Right ventricle myocardium superior (tissue), 1 donor: ENCODE measurements at regions of chr22 and their contacts with region 1.

Region 1: DNA sequence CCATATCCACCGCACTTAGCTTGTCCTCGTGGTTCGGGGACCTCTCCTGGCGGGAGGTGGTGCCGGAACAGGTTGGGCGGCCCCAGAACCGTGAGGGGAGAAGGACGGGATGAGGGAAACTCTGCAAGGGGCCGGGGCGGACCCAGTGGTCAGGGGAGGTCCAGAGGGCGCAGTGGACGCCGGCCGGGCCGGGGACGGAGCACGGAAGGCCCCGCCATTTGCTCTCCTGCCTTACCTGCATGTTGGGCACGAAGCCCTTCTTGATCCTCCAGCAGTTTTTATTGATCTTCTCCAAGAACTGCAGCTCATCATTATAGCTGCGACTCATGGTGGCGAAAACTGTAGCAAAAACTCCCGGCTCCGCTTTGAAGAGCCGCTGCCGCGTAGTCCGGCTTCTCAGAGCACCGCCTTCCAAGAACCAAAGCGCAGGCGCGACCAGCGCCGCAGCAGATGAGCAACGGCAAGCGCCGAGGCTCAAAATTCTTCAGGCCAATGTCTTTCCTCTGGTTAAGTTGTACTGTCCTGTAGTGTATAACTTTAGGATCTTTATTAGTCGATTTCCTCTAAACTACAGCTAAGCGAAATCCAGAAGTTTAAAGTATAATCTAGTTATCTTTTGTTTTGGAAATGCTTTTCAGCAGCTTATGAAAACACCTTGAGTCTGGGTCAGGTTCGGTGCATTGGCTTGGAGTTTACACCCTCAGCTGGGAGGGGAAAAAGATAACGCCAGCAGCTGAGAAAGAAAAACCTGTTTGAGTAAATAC is at the start of gene RTCB:
- DNase-seq: peak; percentile 95
- ATAC-seq: peak; percentile 96
- total RNA-seq, gene RTCB: 38.5 TPM

Region 2: DNA sequence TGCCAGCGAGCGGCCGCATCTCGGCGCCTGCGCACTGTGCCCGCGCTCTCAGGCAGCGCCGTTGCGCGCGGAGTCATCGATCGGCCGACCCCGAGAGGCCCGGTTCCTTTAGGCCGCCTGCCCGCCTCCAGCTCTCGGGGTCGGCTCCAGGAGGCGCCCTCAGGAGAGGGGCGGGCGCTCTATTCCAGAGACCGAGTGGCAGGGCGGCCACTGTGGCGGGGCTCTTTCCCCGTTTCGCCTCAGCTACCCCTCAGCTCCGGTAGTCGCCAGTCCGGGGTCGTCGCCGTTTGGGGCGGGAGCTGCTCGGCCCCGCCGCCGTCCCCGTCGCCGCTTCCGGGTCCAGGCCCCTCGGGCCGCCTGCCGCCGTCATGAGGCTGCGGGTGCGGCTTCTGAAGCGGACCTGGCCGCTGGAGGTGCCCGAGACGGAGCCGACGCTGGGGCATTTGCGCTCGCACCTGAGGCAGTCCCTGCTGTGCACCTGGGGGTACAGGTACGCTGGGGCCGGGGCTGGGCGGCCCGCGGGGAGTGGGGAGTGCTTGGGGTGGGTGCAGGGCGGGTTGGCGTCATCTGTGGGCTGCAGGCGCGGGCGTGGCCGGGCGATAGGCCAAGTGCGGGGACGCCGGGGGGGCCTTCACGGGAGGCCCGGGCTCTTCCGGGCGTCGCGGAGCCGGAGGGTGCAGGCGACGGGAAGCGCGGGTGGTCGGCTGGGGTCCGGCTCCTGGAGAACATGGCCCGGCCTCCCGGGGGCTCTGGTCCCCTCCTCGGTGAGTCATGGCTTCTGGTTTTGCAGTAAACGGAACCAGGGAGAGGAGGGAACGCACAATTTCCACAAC is 62.8 kb after region 1 on chr22 and contains the start of gene FBXO7:
- intact Hi-C with region 1: loop called (anchors 10 kb)
- DNase-seq: peak; percentile 96
- ATAC-seq: peak; percentile 93
- total RNA-seq, gene FBXO7: 30.3 TPM

Region 3: DNA sequence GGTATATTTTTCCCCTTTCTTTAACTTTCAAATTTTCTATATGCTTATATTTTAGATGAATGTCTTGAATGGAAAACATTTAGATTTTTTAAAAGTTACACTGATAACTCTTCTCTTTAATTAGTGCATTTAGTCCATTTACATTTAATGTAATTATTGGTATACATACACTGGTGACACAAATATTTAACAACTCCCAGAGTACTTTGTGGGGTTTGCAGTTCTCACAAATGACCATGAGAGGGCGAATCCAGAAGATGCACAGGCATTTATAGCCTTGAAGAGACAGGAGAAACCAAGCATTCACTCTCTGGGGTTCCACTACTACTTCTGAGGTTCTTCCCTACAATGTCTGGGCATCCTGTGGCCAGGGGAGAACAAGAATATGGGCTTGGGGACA is 514.6 kb after region 1 on chr22:
- intact Hi-C with region 1: no loop called
- DNase-seq: no peak
- ATAC-seq: peak; percentile 51